Endothelial cell of umbilical vein (primary cell): ENCODE measurements at regions of chr12 and their contacts with region 1.

Region 1: DNA sequence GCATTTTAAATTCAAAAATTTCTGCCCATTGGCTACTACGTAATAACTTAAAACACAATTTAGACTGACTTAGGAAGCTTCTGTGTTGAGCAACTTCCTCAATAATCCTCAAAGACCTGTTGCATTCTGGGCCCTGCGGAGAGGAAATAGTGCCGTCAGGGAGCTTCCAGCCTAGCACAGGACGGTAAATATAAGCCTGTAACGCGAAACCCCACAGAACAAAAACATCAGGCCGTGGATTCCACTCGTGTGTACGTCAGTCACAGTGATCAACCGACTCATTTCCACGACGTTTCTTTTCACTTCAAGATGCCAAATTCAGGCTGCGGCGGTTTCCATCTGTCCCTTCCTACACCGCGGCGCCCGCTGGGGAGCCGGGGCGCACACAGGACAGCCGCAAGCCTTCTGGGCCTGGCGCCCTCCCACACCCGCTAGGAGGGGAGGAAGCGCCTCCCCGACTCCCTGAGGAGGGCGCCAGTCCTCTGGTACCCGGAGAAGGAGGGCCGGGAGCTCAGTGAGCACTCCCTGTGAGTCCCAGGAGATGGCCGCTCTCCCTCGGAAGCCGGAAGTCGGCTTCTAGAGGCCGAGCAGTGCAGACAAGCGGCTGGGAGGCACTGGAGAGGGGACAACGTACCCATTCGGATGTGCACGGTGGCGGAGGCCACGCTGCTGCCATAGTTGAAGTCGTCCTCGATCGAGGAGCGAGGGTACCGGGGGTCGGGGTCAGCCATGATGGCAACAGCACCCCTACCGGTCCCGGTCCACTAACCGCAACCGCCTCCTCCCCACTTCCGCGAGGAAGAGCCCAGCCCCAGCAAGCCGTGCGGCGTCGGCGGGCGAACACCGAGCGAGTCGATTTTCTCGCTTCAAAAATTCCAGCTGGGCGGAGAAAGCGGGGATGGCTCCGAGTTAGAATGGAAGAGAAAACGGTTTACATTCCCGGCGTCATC is at the start of gene TMBIM4:
- DNase-seq: peak; percentile 92
- H3K4me3 ChIP-seq: peak within 1 kb of the TSS; percentile 54 to 99 (median 88)
- H3K27ac ChIP-seq: peak within 1 kb of the TSS; percentile 81
- H3K4me1 ChIP-seq: peaks cover 7% of the 10 kb centered on the region
- H3K27me3 ChIP-seq: no peaks in the 10 kb centered on the region
- CTCF ChIP-seq: peak; percentile 33 to 63
- POLR2A ChIP-seq: no peak
- total RNA-seq, gene TMBIM4: 74.1 and 78.1 TPM in 2 replicates

Region 2: GRCh38 chr12:65962921-65963861 is 206.3 kb before region 1 on chr12:
- CTCF ChIA-PET with region 1: no interaction called
- POLR2A ChIA-PET with region 1: no interaction called
- dilution Hi-C with region 1: no loop called
- intact Hi-C with region 1: no loop called
- DNase-seq: peak; percentile 85
- H3K4me3 ChIP-seq: no peak overlapping the region
- H3K27ac ChIP-seq: peak overlapping the region; percentile 70
- H3K4me1 ChIP-seq: peaks cover 36% of the 10 kb centered on the region
- H3K27me3 ChIP-seq: no peaks in the 10 kb centered on the region
- CTCF ChIP-seq: peak; percentile 7 to 11
- POLR2A ChIP-seq: no peak

Region 3: GRCh38 chr12:66130277-66131066 is 39.0 kb before region 1 on chr12 and contains the start of gene LLPH:
- CTCF ChIA-PET with region 1: interaction called, 8 read pairs
- POLR2A ChIA-PET with region 1: interaction called, 7 read pairs
- dilution Hi-C with region 1: no loop called
- intact Hi-C with region 1: loop called (anchors 1 kb)
- DNase-seq: peak; percentile 80
- H3K4me3 ChIP-seq: peak within 1 kb of the TSS; percentile 68 to 85 (median 82)
- H3K27ac ChIP-seq: peak within 1 kb of the TSS; percentile 67
- H3K4me1 ChIP-seq: peaks cover 16% of the 10 kb centered on the region
- H3K27me3 ChIP-seq: no peaks in the 10 kb centered on the region
- CTCF ChIP-seq: no peak
- POLR2A ChIP-seq: peak; percentile 82
- total RNA-seq, gene LLPH: 34.0 and 35.6 TPM in 2 replicates

Region 4: DNA sequence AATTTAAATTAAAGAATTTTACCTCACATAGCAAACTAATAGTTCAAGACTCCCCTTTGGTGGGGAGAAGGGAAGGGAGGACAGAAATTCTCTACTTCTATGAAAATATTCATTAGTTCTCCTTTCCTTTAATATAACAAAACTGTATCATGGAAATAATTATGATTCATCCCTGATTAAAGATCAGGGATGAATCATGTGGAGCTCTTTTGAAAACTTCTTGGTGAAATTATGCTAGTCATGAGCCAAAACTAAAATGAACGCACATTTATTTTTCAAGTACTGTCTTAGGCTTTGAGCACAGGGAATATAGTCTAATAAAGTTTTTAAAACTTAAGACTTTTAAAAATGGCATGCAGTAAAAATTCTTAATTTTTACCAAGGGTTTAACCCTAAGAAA is 16.8 kb before region 1 on chr12:
- CTCF ChIA-PET with region 1: interaction called, 7 read pairs
- POLR2A ChIA-PET with region 1: no interaction called
- dilution Hi-C with region 1: no loop called
- intact Hi-C with region 1: loop called (anchors 1 kb)
- DNase-seq: peak; percentile 26
- H3K4me3 ChIP-seq: no peak overlapping the region
- H3K27ac ChIP-seq: peak overlapping the region; percentile 29
- H3K4me1 ChIP-seq: peaks cover 16% of the 10 kb centered on the region
- H3K27me3 ChIP-seq: no peaks in the 10 kb centered on the region
- CTCF ChIP-seq: no peak
- POLR2A ChIP-seq: no peak

Region 5: GRCh38 chr12:66188584-66189485 is 19.3 kb after region 1 on chr12 and contains the start of gene IRAK3:
- CTCF ChIA-PET with region 1: interaction called, 3 read pairs
- POLR2A ChIA-PET with region 1: interaction called, 4 read pairs
- dilution Hi-C with region 1: no loop called
- intact Hi-C with region 1: loop called (anchors 1 kb)
- DNase-seq: peak; percentile 70
- H3K4me3 ChIP-seq: peak within 1 kb of the TSS; percentile 44 to 82 (median 69)
- H3K27ac ChIP-seq: peak within 1 kb of the TSS; percentile 41
- H3K4me1 ChIP-seq: peaks cover 20% of the 10 kb centered on the region
- H3K27me3 ChIP-seq: peaks cover 0 to 3% of the 10 kb centered on the region in 2 experiments
- CTCF ChIP-seq: no peak
- POLR2A ChIP-seq: peak; percentile 77
- total RNA-seq, gene IRAK3: 7.4 and 8.5 TPM in 2 replicates

Region 6: GRCh38 chr12:66196806-66197205 is 27.3 kb after region 1 on chr12:
- CTCF ChIA-PET with region 1: interaction called, 11 read pairs
- POLR2A ChIA-PET with region 1: no interaction called
- dilution Hi-C with region 1: no loop called
- intact Hi-C with region 1: no loop called
- DNase-seq: no peak
- H3K4me3 ChIP-seq: no peak overlapping the region
- H3K27ac ChIP-seq: no peak overlapping the region
- H3K4me1 ChIP-seq: peaks cover 19% of the 10 kb centered on the region
- H3K27me3 ChIP-seq: no peaks in the 10 kb centered on the region
- CTCF ChIP-seq: no peak
- POLR2A ChIP-seq: no peak

Region 7: GRCh38 chr12:66235626-66236281 is 66.3 kb after region 1 on chr12:
- CTCF ChIA-PET with region 1: interaction called, 7 read pairs
- POLR2A ChIA-PET with region 1: interaction called, 8 read pairs
- dilution Hi-C with region 1: no loop called
- intact Hi-C with region 1: loop called (anchors 1 kb)
- DNase-seq: peak; percentile 45
- H3K4me3 ChIP-seq: peak overlapping the region; percentile 50 to 78 (median 54)
- H3K27ac ChIP-seq: no peak overlapping the region
- H3K4me1 ChIP-seq: peaks cover 3% of the 10 kb centered on the region
- H3K27me3 ChIP-seq: no peaks in the 10 kb centered on the region
- CTCF ChIP-seq: peak in 1 of 2 donors; percentile 3
- POLR2A ChIP-seq: no peak

Region 8: GRCh38 chr12:66461331-66461730 is 291.8 kb after region 1 on chr12:
- CTCF ChIA-PET with region 1: no interaction called
- POLR2A ChIA-PET with region 1: no interaction called
- dilution Hi-C with region 1: no loop called
- intact Hi-C with region 1: no loop called
- DNase-seq: no peak
- H3K4me3 ChIP-seq: no peak overlapping the region
- H3K27ac ChIP-seq: no peak overlapping the region
- H3K4me1 ChIP-seq: no peaks in the 10 kb centered on the region
- H3K27me3 ChIP-seq: no peaks in the 10 kb centered on the region
- CTCF ChIP-seq: no peak
- POLR2A ChIP-seq: no peak